ENCODE measurements at regions of chr16 and their contacts with region 1.

Region 1: GRCh38 chr16:27359615-27360014 is 42.4 kb upstream of the IL21R start:
- DNase-seq: no peak
- H3K4me3 Mint-ChIP-seq: no peak overlapping the region
- H3K27ac Mint-ChIP-seq: no peak overlapping the region
- H3K4me1 Mint-ChIP-seq: peaks cover 20% of the 10 kb centered on the region
- H3K27me3 Mint-ChIP-seq: no peaks in the 10 kb centered on the region

Region 2: DNA sequence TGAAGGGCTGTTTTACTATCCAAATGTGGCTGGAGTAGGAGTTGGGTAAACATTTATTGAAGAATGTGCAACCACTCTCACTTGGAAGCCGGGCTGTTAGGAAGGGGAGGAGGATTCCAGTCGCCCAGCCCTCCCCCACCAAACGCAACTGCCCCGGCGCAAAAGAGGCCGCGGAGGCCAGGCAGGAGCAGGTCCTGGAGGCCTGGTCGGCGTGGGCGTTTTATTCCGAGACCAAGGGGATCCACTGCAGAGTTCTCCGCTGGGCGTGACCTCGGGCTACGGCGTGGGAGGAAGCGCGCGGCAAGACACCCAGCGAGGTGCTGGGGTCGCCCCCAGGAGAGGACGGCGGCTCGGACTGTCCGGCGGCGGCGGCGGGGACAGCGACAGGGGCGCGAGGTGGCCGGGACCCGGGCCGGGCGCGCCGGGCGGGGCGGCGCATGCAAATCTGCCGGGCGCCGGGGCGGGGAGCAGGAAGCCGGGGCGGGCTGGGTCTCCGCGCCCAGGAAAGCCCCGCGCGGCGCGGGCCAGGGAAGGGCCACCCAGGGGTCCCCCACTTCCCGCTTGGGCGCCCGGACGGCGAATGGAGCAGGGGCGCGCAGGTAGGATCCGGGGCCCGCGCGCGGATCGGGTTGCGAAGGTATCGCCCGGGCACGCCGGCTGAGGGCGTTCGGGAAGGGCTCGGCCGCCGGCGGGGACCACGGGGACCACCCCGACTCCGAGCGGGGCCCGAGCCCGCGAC is 46.0 kb before region 1 on chr16 and contains the start of gene IL4R:
- intact Hi-C with region 1: no loop called
- DNase-seq: peak; percentile 72
- H3K4me3 Mint-ChIP-seq: peak within 1 kb of the TSS; percentile 94
- H3K27ac Mint-ChIP-seq: peak within 1 kb of the TSS; percentile 99
- H3K4me1 Mint-ChIP-seq: peaks cover 47% of the 10 kb centered on the region
- H3K27me3 Mint-ChIP-seq: peaks cover 2% of the 10 kb centered on the region
- total RNA-seq, gene IL4R: 288 and 320 TPM in 2 replicates

Region 3: GRCh38 chr16:27349276-27349675 is 10.3 kb before region 1 on chr16:
- intact Hi-C with region 1: loop called (anchors 1 kb)
- DNase-seq: no peak
- H3K4me3 Mint-ChIP-seq: no peak overlapping the region
- H3K27ac Mint-ChIP-seq: peak overlapping the region; percentile 21
- H3K4me1 Mint-ChIP-seq: peaks cover 24% of the 10 kb centered on the region
- H3K27me3 Mint-ChIP-seq: no peaks in the 10 kb centered on the region

Measured in activated T-helper 1 cell treated with anti-CD3 and anti-CD28 coated beads, Interleukin-12 subunit alpha, Interleukin-12 subunit beta, Interleukin-2, Interleukin-4 antibody, amounts not matched to agents 30 ng/mL and 10 ng/mL and 1 ng/mL, durations not matched to agents 14 hours and 24 hours and 36 hours (primary cell).